ENCODE measurements at regions of chr14 and their contacts with region 1.

Region 1: DNA sequence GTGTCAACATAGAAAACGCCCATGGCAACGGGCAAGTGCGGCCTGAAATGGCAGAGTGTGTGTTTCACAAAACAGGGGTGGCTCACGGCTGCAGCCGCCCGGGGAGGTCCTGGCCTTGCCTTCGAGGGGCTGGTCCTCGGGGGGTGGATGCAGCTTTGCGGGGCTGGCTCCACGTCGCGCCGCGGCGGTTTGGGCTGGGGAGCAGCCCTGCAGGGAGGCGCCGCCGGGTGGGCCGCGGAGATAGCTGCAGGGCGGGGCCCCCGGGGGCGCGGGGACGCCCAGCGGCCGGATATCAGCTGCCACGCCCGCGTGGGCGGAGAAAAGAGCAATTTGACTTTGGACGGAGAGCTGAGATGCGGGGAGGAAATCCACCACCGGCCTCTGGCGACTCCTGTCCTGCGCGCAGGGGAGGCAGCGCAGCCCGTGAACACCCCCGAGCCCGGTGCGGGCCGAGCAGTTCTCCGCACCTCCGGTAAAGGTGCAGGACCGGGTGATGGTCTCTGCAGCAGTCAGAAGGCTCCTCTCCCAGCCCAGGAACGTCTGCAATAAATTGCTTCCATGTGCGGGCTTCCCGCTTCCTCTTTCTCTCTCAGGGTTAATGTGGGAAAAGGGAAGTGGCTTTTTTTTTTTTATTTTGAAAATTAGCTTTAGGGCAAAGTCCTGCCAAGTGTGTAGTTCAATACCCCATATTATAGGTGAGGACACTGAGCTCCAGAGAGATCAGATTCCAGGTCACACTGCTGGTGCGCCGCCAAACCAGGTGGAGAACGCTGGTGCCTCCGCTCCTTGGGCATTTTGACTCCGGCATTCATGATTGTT is 110.5 kb downstream of the ARF6 start:
- DNase-seq: peak; percentile 89 to 90
- H3K4me3 ChIP-seq: peak overlapping the region; percentile 49
- H3K4me3 Mint-ChIP-seq: peak overlapping the region; percentile 88
- H3K27ac Mint-ChIP-seq: peak overlapping the region; percentile 97
- H3K4me1 ChIP-seq: peaks cover 76% of the 10 kb centered on the region
- H3K4me1 Mint-ChIP-seq: peaks cover 41% of the 10 kb centered on the region
- H3K27me3 ChIP-seq: no peaks in the 10 kb centered on the region
- H3K27me3 Mint-ChIP-seq: no peaks in the 10 kb centered on the region
- CTCF ChIP-seq: peak; percentile 19 to 27

Region 2: GRCh38 chr14:49767562-49768300 is 235.7 kb before region 1 on chr14 and contains the start of gene KLHDC2:
- CTCF ChIA-PET with region 1: no interaction called
- POLR2A ChIA-PET with region 1: no interaction called
- intact Hi-C with region 1: loop called (anchors 10 kb)
- DNase-seq: peak; percentile 88 to 94
- H3K4me3 ChIP-seq: peak within 1 kb of the TSS; percentile 99
- H3K4me3 Mint-ChIP-seq: peak within 1 kb of the TSS; percentile 79
- H3K27ac Mint-ChIP-seq: peak within 1 kb of the TSS; percentile 79
- H3K4me1 ChIP-seq: peaks cover 35% of the 10 kb centered on the region
- H3K4me1 Mint-ChIP-seq: peaks cover 10% of the 10 kb centered on the region
- H3K27me3 ChIP-seq: no peaks in the 10 kb centered on the region
- H3K27me3 Mint-ChIP-seq: no peaks in the 10 kb centered on the region
- CTCF ChIP-seq: no peak
- total RNA-seq, gene KLHDC2: 76.5 and 89.4 TPM in 2 replicates

Region 3: GRCh38 chr14:49867831-49868723 is 135.3 kb before region 1 on chr14:
- CTCF ChIA-PET with region 1: interaction called, 14 read pairs
- POLR2A ChIA-PET with region 1: interaction called, 9 read pairs
- intact Hi-C with region 1: no loop called
- DNase-seq: peak; percentile 94 to 97
- H3K4me3 ChIP-seq: peak overlapping the region; percentile 47
- H3K4me3 Mint-ChIP-seq: peak overlapping the region; percentile 95
- H3K27ac Mint-ChIP-seq: peak overlapping the region; percentile 89
- H3K4me1 ChIP-seq: peaks cover 11% of the 10 kb centered on the region
- H3K4me1 Mint-ChIP-seq: peaks cover 5% of the 10 kb centered on the region
- H3K27me3 ChIP-seq: no peaks in the 10 kb centered on the region
- H3K27me3 Mint-ChIP-seq: no peaks in the 10 kb centered on the region
- CTCF ChIP-seq: no peak

Region 4: GRCh38 chr14:49934646-49935045 is 68.8 kb before region 1 on chr14:
- CTCF ChIA-PET with region 1: no interaction called
- POLR2A ChIA-PET with region 1: no interaction called
- intact Hi-C with region 1: no loop called
- DNase-seq: no peak
- H3K4me3 ChIP-seq: no peak overlapping the region
- H3K4me3 Mint-ChIP-seq: no peak overlapping the region
- H3K27ac Mint-ChIP-seq: no peak overlapping the region
- H3K4me1 ChIP-seq: no peaks in the 10 kb centered on the region
- H3K4me1 Mint-ChIP-seq: peaks cover 7% of the 10 kb centered on the region
- H3K27me3 ChIP-seq: no peaks in the 10 kb centered on the region
- H3K27me3 Mint-ChIP-seq: no peaks in the 10 kb centered on the region
- CTCF ChIP-seq: no peak

Region 5: DNA sequence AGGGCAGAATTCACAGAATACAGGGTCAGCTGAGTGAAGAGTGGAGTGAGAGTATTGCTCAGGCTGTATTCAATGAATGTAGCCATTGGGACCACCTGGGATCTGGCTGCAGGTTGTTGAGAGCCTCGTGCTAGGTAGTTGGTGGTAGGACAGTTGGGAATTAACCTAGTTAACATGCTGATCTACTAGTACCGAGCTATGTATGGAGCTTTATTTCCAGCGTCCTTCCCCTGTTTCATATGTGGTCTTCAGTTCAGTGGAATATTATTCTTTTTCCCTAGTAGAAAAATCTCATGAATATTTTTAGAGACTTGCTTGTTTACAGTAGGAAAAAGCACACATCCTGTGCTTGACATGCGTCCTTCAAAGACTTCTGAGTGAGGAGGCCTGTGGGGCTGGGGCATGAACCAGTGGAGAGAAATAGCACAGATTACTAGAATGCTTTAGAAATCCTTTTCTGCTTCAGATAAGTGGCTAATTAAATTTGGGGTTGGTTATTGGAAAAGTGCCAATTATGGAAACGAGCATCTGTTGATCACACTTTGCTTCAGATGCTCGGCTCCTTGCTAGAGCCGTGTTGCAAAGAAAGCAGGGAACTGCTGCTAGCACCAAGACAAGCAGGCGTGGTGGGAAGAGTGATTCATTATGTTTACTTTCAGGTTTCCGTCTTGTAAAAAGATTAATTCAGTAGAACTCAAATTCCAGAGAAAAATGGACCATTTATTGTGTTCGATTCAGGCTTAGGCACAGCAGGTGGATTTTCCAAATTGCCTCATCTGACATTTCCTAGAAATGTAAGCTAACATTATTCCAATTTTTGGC is 56.9 kb before region 1 on chr14:
- CTCF ChIA-PET with region 1: no interaction called
- POLR2A ChIA-PET with region 1: no interaction called
- intact Hi-C with region 1: loop called (anchors 2 kb)
- DNase-seq: peak in 1 of 2 experiments; percentile 29
- H3K4me3 ChIP-seq: no peak overlapping the region
- H3K4me3 Mint-ChIP-seq: peak overlapping the region; percentile 11
- H3K27ac Mint-ChIP-seq: peak overlapping the region; percentile 20
- H3K4me1 ChIP-seq: peaks cover 32% of the 10 kb centered on the region
- H3K4me1 Mint-ChIP-seq: peaks cover 30% of the 10 kb centered on the region
- H3K27me3 ChIP-seq: no peaks in the 10 kb centered on the region
- H3K27me3 Mint-ChIP-seq: no peaks in the 10 kb centered on the region
- CTCF ChIP-seq: no peak

Region 6: DNA sequence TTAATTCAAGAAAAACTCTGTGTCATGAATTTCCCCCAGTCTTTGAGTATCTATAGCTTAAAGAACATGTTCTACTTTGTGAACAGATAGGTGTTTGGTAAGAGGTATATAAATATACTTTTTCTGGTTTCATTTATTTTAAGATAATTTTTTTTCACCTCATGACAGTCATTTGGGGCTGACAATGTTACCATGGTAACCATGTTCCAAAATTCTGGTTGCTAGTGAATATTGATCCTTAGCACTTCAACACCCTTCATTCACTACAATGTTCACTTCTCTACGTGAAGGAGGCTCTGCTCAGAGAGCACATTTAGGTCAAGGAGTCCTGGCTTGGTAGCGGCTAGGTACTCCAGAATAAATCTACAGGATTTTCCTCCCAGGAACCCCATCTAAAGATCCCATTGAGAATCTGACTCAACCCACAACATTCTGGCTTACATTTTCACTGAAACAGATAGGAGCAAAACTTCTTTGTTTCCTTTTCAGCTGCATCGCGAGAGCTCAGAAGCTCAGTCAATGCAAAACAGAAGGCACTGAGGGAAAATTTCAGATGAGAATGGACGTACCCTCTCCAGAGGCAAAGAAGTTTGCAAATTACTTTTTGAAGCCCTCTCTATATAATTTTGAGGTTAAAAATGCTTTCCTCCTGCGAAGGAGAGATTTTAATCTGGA is 16.9 kb before region 1 on chr14:
- CTCF ChIA-PET with region 1: interaction called, 3 read pairs
- POLR2A ChIA-PET with region 1: interaction called, 7 read pairs
- intact Hi-C with region 1: loop called (anchors 1 kb)
- DNase-seq: no peak
- H3K4me3 ChIP-seq: no peak overlapping the region
- H3K4me3 Mint-ChIP-seq: peak overlapping the region; percentile 47
- H3K27ac Mint-ChIP-seq: peak overlapping the region; percentile 90
- H3K4me1 ChIP-seq: peaks cover 61% of the 10 kb centered on the region
- H3K4me1 Mint-ChIP-seq: peaks cover 46% of the 10 kb centered on the region
- H3K27me3 ChIP-seq: no peaks in the 10 kb centered on the region
- H3K27me3 Mint-ChIP-seq: no peaks in the 10 kb centered on the region
- CTCF ChIP-seq: no peak

Region 7: DNA sequence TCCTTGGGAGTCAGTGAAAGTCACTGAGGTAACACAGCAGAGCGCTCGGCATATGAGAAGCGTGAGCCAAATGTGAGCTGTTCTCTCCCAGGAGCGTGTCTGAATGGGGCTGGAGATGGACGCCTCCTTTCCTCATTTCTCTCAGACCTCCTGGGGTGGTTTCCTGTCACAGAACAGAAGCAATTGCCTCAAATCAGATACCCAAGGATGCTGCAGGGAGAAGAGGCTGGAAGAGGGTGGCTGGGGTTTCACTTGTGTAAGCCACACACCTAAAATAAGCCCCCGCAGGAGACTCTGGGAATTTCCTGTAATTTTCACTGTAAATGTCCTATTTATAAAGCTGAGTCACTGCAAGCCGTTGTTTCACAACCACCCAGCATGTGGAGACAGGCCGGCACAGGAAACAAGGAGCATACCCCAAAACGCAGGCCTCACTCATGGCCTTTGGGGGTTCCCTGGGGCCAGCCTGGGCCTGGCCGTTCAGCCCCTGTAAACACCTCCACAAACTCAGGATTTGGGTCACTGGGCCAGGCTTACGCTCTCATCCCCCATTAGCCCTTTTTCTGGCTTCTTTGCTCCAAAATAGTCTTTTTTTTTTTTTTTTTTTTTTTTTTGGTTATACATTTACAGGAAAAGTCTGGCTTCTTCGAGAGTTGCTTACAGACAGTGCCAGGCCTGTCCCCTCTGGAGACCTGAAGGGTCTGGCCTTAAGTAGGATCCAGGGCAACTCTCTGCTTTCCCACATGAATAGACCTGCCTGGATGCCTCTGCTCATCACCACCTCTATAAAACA is 57.6 kb after region 1 on chr14:
- CTCF ChIA-PET with region 1: interaction called, 4 read pairs
- POLR2A ChIA-PET with region 1: interaction called, 6 read pairs
- intact Hi-C with region 1: loop called (anchors 2 kb)
- DNase-seq: peak; percentile 74 to 75
- H3K4me3 ChIP-seq: no peak overlapping the region
- H3K4me3 Mint-ChIP-seq: no peak overlapping the region
- H3K27ac Mint-ChIP-seq: peak overlapping the region; percentile 89
- H3K4me1 ChIP-seq: peaks cover 76% of the 10 kb centered on the region
- H3K4me1 Mint-ChIP-seq: peaks cover 26% of the 10 kb centered on the region
- H3K27me3 ChIP-seq: no peaks in the 10 kb centered on the region
- H3K27me3 Mint-ChIP-seq: no peaks in the 10 kb centered on the region
- CTCF ChIP-seq: peak; percentile 9 to 28

Region 8: DNA sequence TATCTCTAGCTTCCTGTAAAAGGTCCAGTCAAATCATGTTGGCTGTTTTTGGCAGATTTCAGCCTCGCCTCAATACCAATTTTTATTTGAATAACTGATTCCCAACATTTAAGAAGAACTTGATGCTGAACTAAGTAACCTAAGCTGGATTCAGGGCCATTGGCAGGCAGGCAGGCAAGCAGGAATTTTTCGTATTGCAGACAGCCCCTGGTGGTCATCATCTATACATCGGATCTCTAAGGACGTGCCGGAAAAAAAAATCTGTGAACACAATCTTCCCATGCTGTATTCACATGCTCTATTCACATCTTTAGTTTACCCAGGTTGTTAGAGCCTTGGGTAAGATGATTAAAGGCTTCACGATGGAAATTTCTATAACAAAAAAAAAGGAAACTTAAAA is 105.9 kb after region 1 on chr14:
- CTCF ChIA-PET with region 1: no interaction called
- POLR2A ChIA-PET with region 1: no interaction called
- intact Hi-C with region 1: loop called (anchors 1 kb)
- DNase-seq: peak in 1 of 2 experiments; percentile 40
- H3K4me3 ChIP-seq: no peak overlapping the region
- H3K4me3 Mint-ChIP-seq: no peak overlapping the region
- H3K27ac Mint-ChIP-seq: no peak overlapping the region
- H3K4me1 ChIP-seq: peaks cover 3% of the 10 kb centered on the region; the same call in 1 of the 2 replicates
- H3K4me1 Mint-ChIP-seq: no peaks in the 10 kb centered on the region
- H3K27me3 ChIP-seq: no peaks in the 10 kb centered on the region
- H3K27me3 Mint-ChIP-seq: no peaks in the 10 kb centered on the region
- CTCF ChIP-seq: peak; percentile 50 to 57

Measured in Caco-2 (cell line).